PC-3 (cell line): ENCODE measurements at regions of chr10 and their contacts with region 1.

Region 1: GRCh38 chr10:101879456-101880231 is 36.0 kb upstream of the KCNIP2 start:
- DNase-seq: peak; percentile 89
- ATAC-seq: peak; percentile 87
- H3K4me3 ChIP-seq: no peak overlapping the region
- H3K27ac ChIP-seq: peak overlapping the region; percentile 95
- H3K4me1 ChIP-seq: peaks cover 26% of the 10 kb centered on the region
- H3K27me3 ChIP-seq: no peaks in the 10 kb centered on the region
- CTCF ChIP-seq: no peak

Region 2: GRCh38 chr10:101848894-101849351 is 30.7 kb before region 1 on chr10:
- CTCF ChIA-PET with region 1: no interaction called
- POLR2A ChIA-PET with region 1: no interaction called
- intact Hi-C with region 1: loop called (anchors 2 kb)
- DNase-seq: no peak
- ATAC-seq: peak; percentile 30
- H3K4me3 ChIP-seq: no peak overlapping the region
- H3K27ac ChIP-seq: peak overlapping the region; percentile 76
- H3K4me1 ChIP-seq: peaks cover 20% of the 10 kb centered on the region
- H3K27me3 ChIP-seq: no peaks in the 10 kb centered on the region
- CTCF ChIP-seq: no peak